ENCODE measurements at regions of chr2 and their contacts with region 1.

Region 1: GRCh38 chr2:197838036-197838435 is 33.6 kb downstream of the PLCL1 start:
- DNase-seq: no peak
- ATAC-seq: peak in 3 of 4 donors; percentile 27 to 70 (median 62)
- H3K4me3 ChIP-seq: peak overlapping the region; percentile 43
- H3K27ac ChIP-seq: no peak overlapping the region
- H3K4me1 ChIP-seq: peaks cover 24% of the 10 kb centered on the region
- H3K27me3 ChIP-seq: no peaks in the 10 kb centered on the region
- CTCF ChIP-seq: no peak

Region 2: DNA sequence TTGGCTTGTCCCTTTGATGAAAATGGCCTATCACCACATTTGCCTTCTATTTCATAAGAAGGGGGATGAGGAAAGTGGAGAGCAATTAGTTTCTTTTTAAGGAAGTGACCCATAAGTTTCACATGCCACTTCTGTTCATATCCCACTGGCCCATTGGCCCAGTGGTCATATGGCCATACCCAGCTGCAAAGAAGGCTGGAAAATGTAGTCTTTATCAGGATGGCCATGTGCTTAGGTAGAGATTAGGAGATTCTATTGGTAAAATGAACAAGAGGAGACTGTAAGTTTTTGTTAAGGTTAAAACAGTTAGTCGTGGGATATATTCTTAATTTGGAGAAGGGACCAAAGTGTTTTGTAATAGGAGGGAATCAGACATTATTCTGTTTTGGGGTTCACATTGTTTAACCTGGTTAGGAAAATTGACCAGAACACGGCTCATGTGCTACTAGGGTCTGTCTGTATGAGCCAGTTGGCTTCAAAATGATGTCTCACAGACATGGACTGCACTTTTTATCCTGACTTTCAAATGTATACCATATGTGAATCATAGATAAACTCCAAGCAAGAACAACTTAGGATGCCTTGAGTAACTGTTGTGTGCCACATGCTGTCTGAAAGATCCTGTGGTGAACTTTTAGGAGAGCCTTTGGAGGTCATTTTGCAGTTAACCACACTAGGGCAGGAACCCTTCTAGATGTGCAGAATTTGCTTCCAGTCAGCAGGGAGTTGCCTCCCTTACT is 16.3 kb before region 1 on chr2:
- intact Hi-C with region 1: loop called in 1 of 2 experiments (anchors 2 kb)
- DNase-seq: no peak
- ATAC-seq: no peak
- H3K4me3 ChIP-seq: no peak overlapping the region
- H3K27ac ChIP-seq: no peak overlapping the region
- H3K4me1 ChIP-seq: peaks cover 4% of the 10 kb centered on the region
- H3K27me3 ChIP-seq: no peaks in the 10 kb centered on the region
- CTCF ChIP-seq: no peak

Measured in psoas muscle (tissue), 8 donors.